Naive thymus-derived CD8-positive, alpha-beta T cell (primary cell): ENCODE measurements at regions of chr20 and their contacts with region 1.

Region 1: DNA sequence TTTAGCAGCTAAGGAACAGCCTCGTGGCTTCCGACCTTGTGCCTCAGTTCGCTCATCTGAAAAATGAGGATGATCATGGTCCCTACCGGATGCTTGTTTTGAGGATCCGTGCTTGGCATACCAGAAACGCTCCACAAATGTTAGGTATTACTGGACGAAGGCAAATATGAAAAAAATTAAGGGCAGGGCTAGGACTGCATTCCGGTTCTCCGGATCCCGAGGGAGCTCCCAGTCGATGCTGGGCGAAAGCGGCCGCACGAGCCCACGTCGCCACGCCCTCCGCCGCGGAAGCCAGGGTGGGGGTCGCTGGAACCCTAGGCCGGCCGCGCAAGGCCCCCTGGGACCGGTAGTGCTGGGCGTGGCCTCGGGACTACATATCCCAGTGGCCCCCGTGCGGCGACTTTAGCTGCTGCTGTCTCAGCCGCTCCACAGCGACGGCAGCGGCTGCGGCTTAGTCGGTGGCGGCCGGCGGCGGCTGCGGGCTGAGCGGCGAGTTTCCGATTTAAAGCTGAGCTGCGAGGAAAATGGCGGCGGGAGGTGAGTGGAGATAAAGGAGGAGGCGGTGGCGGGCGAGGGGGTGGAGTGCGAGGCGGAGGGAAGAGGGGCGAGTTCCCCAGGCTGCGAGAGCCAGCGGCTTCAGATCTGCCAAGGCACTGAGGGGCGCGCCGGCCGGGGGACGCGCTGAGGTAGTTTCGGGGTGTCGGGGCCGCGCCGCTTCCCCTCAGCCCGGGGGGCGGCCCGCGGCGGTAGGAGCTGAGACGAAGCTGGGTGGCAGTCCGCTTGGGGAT is at the start of gene NCOA3:
- DNase-seq: peak; percentile 73 to 91 (median 86)
- ATAC-seq: peak; percentile 83 to 87
- H3K4me3 Mint-ChIP-seq: peak within 1 kb of the TSS; percentile 92 to 100 (median 98)
- H3K27ac Mint-ChIP-seq: peak within 1 kb of the TSS; percentile 96 to 98 (median 96)
- H3K4me1 Mint-ChIP-seq: peaks cover 19 to 42% (median 39%) of the 10 kb centered on the region in 4 donors
- H3K27me3 Mint-ChIP-seq: no peaks in the 10 kb centered on the region
- polyA plus RNA-seq, gene NCOA3: 18.4 to 27.8 (median 20.1) TPM

Region 2: DNA sequence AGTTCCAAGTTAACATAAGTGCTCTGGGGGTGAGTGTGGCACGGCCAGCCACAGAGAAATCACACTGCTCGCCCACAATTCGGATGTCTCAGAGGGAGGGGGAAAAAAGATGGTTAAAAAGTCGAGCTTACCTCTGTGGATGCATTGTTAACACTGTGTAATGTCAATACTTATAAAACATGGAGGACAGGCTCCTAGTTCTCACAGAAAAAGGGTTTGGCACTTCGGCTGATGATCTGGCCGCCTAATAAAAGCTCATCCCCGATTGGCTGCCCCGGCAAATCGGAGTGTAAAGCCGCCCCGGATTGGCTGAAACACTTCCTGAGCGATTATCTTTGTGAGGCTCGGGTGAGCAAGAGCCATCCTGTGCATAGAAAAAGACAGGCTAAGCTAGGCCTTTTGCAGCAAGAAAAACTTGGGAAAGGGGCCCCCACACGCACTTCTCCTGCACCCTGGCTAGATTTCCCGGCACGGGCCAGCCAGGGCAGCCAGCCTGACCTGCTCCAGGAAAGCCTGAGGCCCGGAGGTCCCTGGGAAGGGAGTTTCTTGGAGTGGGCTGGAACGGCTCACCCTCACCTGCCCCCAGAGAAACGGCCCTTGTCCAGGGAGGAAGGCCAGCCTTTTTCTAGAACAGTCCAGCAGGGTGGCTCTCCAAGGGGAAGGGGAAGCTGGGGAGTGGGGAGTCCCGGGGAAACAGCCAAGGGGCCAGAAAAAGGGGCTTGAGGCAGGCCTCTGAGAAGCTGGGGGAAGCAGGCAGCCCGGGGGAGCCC is 145.0 kb before region 1 on chr20 and contains the start of gene ZMYND8:
- POLR2A ChIA-PET with region 1: interaction called, 14 read pairs
- DNase-seq: peak; percentile 72 to 100 (median 96)
- ATAC-seq: peak; percentile 79 to 84
- H3K4me3 Mint-ChIP-seq: peak within 1 kb of the TSS in 7 of 10 donors; percentile 85 to 97 (median 92)
- H3K27ac Mint-ChIP-seq: peak within 1 kb of the TSS in 8 of 10 donors; percentile 98 to 100 (median 99)
- H3K4me1 Mint-ChIP-seq: peaks cover 0 to 57% (median 47%) of the 10 kb centered on the region in 4 donors
- H3K27me3 Mint-ChIP-seq: no peaks in the 10 kb centered on the region
- polyA plus RNA-seq, gene ZMYND8: 8.9 to 20.4 (median 13.5) TPM

Region 3: DNA sequence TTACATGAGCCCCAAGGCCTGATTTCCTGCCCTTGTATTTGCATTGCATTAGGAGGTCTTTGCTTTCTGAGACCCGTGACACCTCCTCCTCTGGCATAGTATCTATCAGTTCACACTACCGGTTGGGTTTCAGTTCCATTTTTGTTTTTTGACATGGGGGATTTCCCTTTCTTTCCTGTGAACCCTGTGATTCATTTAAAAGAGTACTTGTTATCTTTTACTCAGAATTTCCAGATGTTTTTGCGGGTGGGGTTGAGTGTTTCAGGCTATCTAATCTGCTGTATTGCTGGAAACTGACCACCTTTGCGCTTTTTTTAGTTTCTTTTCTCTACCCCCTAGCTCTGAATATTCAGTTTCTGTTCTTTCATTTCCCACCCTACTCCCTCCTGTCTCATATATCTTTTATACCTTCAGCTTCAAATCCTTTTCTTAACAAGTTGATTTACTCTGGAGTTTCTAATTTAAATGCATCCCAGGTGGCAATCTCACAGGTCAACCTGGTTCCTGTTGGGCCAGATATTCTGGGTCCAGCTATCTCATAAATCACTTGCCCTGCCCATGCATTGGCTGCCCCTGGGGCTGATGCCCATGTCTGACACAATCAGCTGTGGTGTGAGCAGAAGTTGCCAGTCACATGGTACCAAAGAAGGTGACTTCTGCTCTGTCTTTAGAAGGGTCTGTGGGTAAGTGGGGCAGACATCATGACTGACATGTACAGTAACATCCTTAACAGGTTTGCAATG is 14.3 kb before region 1 on chr20:
- POLR2A ChIA-PET with region 1: interaction called, 46 read pairs
- DNase-seq: peak in 9 of 10 donors; percentile 32 to 77 (median 52)
- ATAC-seq: peak; percentile 90 to 92
- H3K4me3 Mint-ChIP-seq: peak overlapping the region; percentile 46 to 79 (median 68)
- H3K27ac Mint-ChIP-seq: peak overlapping the region; percentile 3 to 94 (median 90)
- H3K4me1 Mint-ChIP-seq: peaks cover 13 to 59% (median 38%) of the 10 kb centered on the region in 4 donors
- H3K27me3 Mint-ChIP-seq: no peaks in the 10 kb centered on the region